K562 (cell line): ENCODE measurements at regions of chr4 and their contacts with region 1.

Region 1: GRCh38 chr4:38730830-38731646 is 51.8 kb downstream of the TLR10 start:
- DNase-seq: peak; percentile 75 to 87 (median 84)
- ATAC-seq: peak; percentile 98
- H3K4me3 ChIP-seq: no peak overlapping the region
- H3K27ac ChIP-seq: no peak overlapping the region
- H3K4me1 ChIP-seq: peaks cover 0 to 2% of the 10 kb centered on the region in 2 experiments; a peak in 3 of 5 replicates
- H3K27me3 ChIP-seq: no peaks in the 10 kb centered on the region
- CTCF ChIP-seq: peak; percentile 86 to 96 (median 88)
- EP300 ChIP-seq: no peak
- POLR2A ChIP-seq: no peak
- RAD21 ChIP-seq: peak; percentile 95 to 98

Region 2: GRCh38 chr4:37812710-37813109 is 918.3 kb before region 1 on chr4:
- CTCF ChIA-PET with region 1: no interaction called
- POLR2A ChIA-PET with region 1: no interaction called
- in situ Hi-C with region 1: loop called (anchors 5 kb)
- intact Hi-C with region 1: no loop called
- DNase-seq: no peak
- ATAC-seq: no peak
- H3K4me3 ChIP-seq: no peak overlapping the region
- H3K27ac ChIP-seq: no peak overlapping the region
- H3K4me1 ChIP-seq: no peaks in the 10 kb centered on the region
- H3K27me3 ChIP-seq: peaks cover 2 to 10% of the 10 kb centered on the region in 2 experiments
- CTCF ChIP-seq: no peak
- EP300 ChIP-seq: no peak
- POLR2A ChIP-seq: no peak
- RAD21 ChIP-seq: no peak

Region 3: GRCh38 chr4:38069271-38069760 is 661.7 kb before region 1 on chr4:
- CTCF ChIA-PET with region 1: interaction called, 9 read pairs
- POLR2A ChIA-PET with region 1: interaction called, 3 read pairs
- in situ Hi-C with region 1: loop called (anchors 5 kb)
- intact Hi-C with region 1: loop called (anchors 1 kb)
- DNase-seq: peak; percentile 41 to 78 (median 56)
- ATAC-seq: peak; percentile 96
- H3K4me3 ChIP-seq: no peak overlapping the region
- H3K27ac ChIP-seq: no peak overlapping the region
- H3K4me1 ChIP-seq: peaks cover 7 to 10% of the 10 kb centered on the region in 2 experiments; a peak in 3 of 5 replicates
- H3K27me3 ChIP-seq: no peaks in the 10 kb centered on the region
- CTCF ChIP-seq: peak; percentile 69 to 94 (median 89)
- EP300 ChIP-seq: peak; percentile 48; the same call in 1 of the 2 replicates
- POLR2A ChIP-seq: no peak
- RAD21 ChIP-seq: peak; percentile 89 to 94

Region 4: GRCh38 chr4:38179690-38180377 is 551.2 kb before region 1 on chr4:
- CTCF ChIA-PET with region 1: interaction called, 9 read pairs
- POLR2A ChIA-PET with region 1: interaction called, 3 read pairs
- in situ Hi-C with region 1: loop called (anchors 5 kb)
- intact Hi-C with region 1: loop called (anchors 1 kb)
- DNase-seq: peak; percentile 60 to 76 (median 72)
- ATAC-seq: peak; percentile 83
- H3K4me3 ChIP-seq: no peak overlapping the region
- H3K27ac ChIP-seq: no peak overlapping the region
- H3K4me1 ChIP-seq: peaks cover 4 to 15% of the 10 kb centered on the region in 2 experiments
- H3K27me3 ChIP-seq: no peaks in the 10 kb centered on the region; a peak in 1 of 5 replicates
- CTCF ChIP-seq: peak; percentile 82 to 90 (median 88)
- EP300 ChIP-seq: no peak
- POLR2A ChIP-seq: no peak
- RAD21 ChIP-seq: peak; percentile 97 to 98

Region 5: GRCh38 chr4:38523524-38524448 is 207.3 kb before region 1 on chr4:
- CTCF ChIA-PET with region 1: no interaction called
- POLR2A ChIA-PET with region 1: no interaction called
- in situ Hi-C with region 1: no loop called
- intact Hi-C with region 1: loop called (anchors 1 kb)
- DNase-seq: peak; percentile 55 to 79 (median 68)
- ATAC-seq: peak; percentile 87
- H3K4me3 ChIP-seq: peak overlapping the region; percentile 2; the same call in 1 of the 2 replicates
- H3K27ac ChIP-seq: peak overlapping the region; percentile 91
- H3K4me1 ChIP-seq: peaks cover 13 to 35% of the 10 kb centered on the region in 2 experiments
- H3K27me3 ChIP-seq: no peaks in the 10 kb centered on the region
- CTCF ChIP-seq: no peak
- EP300 ChIP-seq: peak; percentile 13; the same call in 1 of the 2 replicates
- POLR2A ChIP-seq: no peak
- RAD21 ChIP-seq: no peak

Region 6: GRCh38 chr4:38691251-38692008 is 39.6 kb before region 1 on chr4:
- CTCF ChIA-PET with region 1: no interaction called
- POLR2A ChIA-PET with region 1: no interaction called
- in situ Hi-C with region 1: no loop called
- intact Hi-C with region 1: no loop called
- DNase-seq: no peak
- ATAC-seq: no peak
- H3K4me3 ChIP-seq: no peak overlapping the region
- H3K27ac ChIP-seq: no peak overlapping the region
- H3K4me1 ChIP-seq: no peaks in the 10 kb centered on the region
- H3K27me3 ChIP-seq: no peaks in the 10 kb centered on the region
- CTCF ChIP-seq: no peak
- EP300 ChIP-seq: no peak
- POLR2A ChIP-seq: no peak; the same call in 1 of the 2 replicates
- RAD21 ChIP-seq: no peak

Region 7: DNA sequence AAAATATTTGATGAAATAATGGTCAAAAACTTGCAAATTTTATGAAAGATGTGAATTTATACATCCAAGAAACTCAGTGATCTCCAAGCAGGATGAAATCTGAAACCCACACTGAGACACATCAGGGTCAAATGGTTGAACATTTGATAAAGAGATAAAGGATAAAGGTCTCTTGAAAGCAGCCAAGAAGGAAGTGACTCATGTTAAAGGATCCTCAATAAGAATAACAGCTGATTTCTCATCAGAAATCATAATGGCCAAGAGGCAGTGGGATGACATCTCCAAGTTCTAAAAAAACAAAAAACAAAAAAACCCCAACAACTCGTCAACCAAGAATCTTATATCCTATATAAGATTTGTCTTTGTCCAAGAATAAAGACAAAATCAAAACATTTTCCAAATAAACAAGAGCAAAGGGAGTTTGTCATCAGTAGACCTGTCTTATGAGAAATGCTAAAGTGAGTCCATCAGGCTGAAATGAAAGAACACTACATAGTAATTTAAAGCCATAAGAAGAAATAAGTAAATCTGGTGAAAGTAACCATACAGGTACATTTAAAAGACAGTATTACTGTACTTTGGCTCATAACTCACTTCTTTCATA is 1125.0 kb after region 1 on chr4:
- CTCF ChIA-PET with region 1: no interaction called
- POLR2A ChIA-PET with region 1: no interaction called
- in situ Hi-C with region 1: no loop called
- intact Hi-C with region 1: no loop called
- DNase-seq: peak in 3 of 4 experiments; percentile 4 to 15 (median 6)
- ATAC-seq: no peak
- H3K4me3 ChIP-seq: no peak overlapping the region
- H3K27ac ChIP-seq: no peak overlapping the region
- H3K4me1 ChIP-seq: no peaks in the 10 kb centered on the region
- H3K27me3 ChIP-seq: no peaks in the 10 kb centered on the region
- CTCF ChIP-seq: no peak
- EP300 ChIP-seq: peak; percentile 41; the same call in 1 of the 2 replicates
- POLR2A ChIP-seq: no peak
- RAD21 ChIP-seq: no peak